SK-N-SH (cell line): ENCODE measurements at regions of chr15 and their contacts with region 1.

Region 1: DNA sequence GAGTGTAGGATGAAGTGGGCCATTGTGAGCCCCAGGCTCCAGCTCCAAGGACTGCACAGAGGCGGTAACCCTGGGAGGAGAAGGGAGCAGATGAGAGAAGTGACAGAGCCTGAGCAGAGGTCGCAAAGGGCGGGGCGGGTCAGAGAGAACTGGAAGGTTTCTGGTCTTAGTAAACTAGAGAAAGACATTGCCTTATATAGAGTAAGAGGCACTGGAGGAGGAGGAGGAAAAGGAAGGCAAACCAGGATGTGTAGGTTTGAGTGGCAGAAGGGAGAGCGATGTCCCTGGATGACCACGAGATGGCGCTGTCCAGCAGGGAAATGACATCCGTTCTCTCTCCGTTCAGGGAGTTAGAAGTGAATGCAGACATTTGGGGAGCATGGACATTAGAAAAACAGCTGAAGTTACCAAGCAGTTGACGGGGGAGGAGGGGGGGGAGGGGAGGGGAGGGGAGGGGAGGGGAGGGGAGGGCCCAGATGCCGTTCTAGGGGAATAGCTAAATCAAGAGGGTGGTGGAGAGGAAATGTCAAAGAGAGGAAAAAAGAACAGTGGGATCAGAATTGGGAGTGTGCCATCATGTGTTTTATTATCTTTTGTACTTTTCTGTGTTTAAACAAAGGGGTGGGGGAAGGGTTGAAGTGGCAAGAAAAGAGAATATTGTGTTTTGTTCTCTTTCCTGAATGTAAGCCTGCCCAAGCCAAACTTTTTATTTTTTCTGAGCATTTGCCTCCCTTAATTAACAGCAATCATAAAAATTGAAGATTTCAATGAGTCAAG is 48.8 kb downstream of the STARD5 start:
- DNase-seq: peak; percentile 74
- H3K4me3 ChIP-seq: no peak overlapping the region; a peak in 1 of 4 replicates
- H3K27ac ChIP-seq: no peak overlapping the region
- H3K4me1 ChIP-seq: no peaks in the 10 kb centered on the region; a peak in 1 of 4 replicates
- H3K27me3 ChIP-seq: peaks cover 15% of the 10 kb centered on the region; the same call in 1 of the 2 replicates
- CTCF ChIP-seq: peak; percentile 74
- EP300 ChIP-seq: no peak
- RAD21 ChIP-seq: peak; percentile 96

Region 2: DNA sequence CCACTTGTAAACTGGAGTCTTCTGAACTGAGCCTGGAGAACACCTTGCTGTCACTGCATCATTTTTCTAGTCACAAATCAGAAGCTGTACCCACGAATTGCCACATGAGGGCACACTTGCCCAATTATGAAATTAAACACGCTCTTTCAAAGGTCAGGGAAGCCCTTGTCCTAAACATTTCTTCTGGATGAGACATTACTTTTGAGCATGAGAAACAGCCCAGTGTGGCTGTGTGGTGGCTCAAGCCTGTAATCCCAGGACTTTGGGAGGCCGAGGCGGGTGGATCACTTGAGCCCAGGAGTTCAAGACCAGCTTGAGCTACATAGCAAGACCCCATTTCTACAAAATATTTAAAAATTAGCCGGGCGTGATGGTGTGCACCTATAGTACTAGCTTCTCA is 168.6 kb before region 1 on chr15:
- CTCF ChIA-PET with region 1: interaction called, 451 read pairs
- POLR2A ChIA-PET with region 1: no interaction called
- DNase-seq: peak; percentile 70
- H3K4me3 ChIP-seq: no peak overlapping the region; a peak in 1 of 4 replicates
- H3K27ac ChIP-seq: no peak overlapping the region
- H3K4me1 ChIP-seq: no peaks in the 10 kb centered on the region
- H3K27me3 ChIP-seq: peaks cover 5% of the 10 kb centered on the region; the same call in 1 of the 2 replicates
- CTCF ChIP-seq: peak; percentile 81
- EP300 ChIP-seq: no peak
- RAD21 ChIP-seq: peak; percentile 94

Region 3: GRCh38 chr15:81286621-81287121 is 11.6 kb after region 1 on chr15:
- CTCF ChIA-PET with region 1: interaction called, 57 read pairs
- POLR2A ChIA-PET with region 1: no interaction called
- DNase-seq: no peak
- H3K4me3 ChIP-seq: no peak overlapping the region
- H3K27ac ChIP-seq: no peak overlapping the region
- H3K4me1 ChIP-seq: no peaks in the 10 kb centered on the region
- H3K27me3 ChIP-seq: peaks cover 20% of the 10 kb centered on the region
- CTCF ChIP-seq: no peak
- EP300 ChIP-seq: no peak
- RAD21 ChIP-seq: no peak

Region 4: DNA sequence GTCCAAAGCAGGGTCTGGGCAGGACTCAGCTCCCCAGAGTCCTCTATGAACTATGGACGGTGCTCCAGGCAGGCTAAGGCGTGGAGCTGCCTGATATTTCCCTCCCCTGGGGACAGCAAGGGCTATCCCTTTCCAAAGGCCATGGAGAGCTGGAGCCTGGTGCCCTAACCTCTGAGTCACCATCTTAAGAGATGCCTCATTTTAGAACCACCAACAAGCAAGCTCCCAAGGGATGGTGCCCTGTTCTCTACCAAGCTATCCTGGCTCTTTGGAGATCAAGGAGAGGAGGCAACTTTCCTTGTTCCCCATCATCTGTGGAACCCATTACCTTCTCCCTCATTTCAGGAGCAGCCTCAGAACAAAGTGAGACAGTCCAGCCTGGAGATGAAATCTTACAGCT is 33.1 kb after region 1 on chr15:
- CTCF ChIA-PET with region 1: interaction called, 13 read pairs
- POLR2A ChIA-PET with region 1: no interaction called
- DNase-seq: no peak
- H3K4me3 ChIP-seq: no peak overlapping the region
- H3K27ac ChIP-seq: no peak overlapping the region
- H3K4me1 ChIP-seq: peaks cover 11 to 18% of the 10 kb centered on the region in 2 experiments; a peak in 2 of 4 replicates
- H3K27me3 ChIP-seq: no peaks in the 10 kb centered on the region
- CTCF ChIP-seq: no peak
- EP300 ChIP-seq: no peak
- RAD21 ChIP-seq: no peak

Region 5: GRCh38 chr15:81394603-81395002 is 119.5 kb after region 1 on chr15:
- CTCF ChIA-PET with region 1: interaction called, 173 read pairs
- POLR2A ChIA-PET with region 1: no interaction called
- DNase-seq: no peak
- H3K4me3 ChIP-seq: no peak overlapping the region
- H3K27ac ChIP-seq: no peak overlapping the region
- H3K4me1 ChIP-seq: no peaks in the 10 kb centered on the region
- H3K27me3 ChIP-seq: peaks cover 3% of the 10 kb centered on the region; the same call in 1 of the 2 replicates
- CTCF ChIP-seq: no peak
- EP300 ChIP-seq: no peak
- RAD21 ChIP-seq: no peak

Region 6: GRCh38 chr15:81410318-81410753 is 135.2 kb after region 1 on chr15:
- CTCF ChIA-PET with region 1: interaction called, 93 read pairs
- POLR2A ChIA-PET with region 1: no interaction called
- DNase-seq: peak; percentile 57
- H3K4me3 ChIP-seq: no peak overlapping the region; a peak in 1 of 4 replicates
- H3K27ac ChIP-seq: no peak overlapping the region
- H3K4me1 ChIP-seq: peaks cover 0 to 17% of the 10 kb centered on the region in 2 experiments; a peak in 2 of 4 replicates
- H3K27me3 ChIP-seq: no peaks in the 10 kb centered on the region
- CTCF ChIP-seq: peak; percentile 70
- EP300 ChIP-seq: no peak
- RAD21 ChIP-seq: peak; percentile 91

Region 7: DNA sequence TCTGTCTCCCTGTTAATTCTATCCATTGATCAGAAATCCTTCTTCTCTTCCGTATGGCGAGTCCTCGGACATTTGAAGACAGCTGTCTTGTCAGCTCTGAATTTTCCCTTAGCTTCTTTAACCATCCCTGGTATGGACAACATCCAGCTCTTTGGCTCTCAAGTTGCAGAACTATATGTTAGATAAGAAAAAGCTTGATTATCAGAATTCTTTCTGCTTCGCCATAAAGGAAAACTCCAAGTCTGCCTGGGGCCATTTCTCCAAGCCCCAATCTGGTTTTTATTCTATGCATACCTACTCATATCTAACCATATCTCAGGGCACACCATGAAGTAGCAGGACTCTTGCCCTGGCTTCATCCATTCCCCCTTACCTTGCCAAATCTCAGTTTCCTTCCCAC is 314.6 kb after region 1 on chr15:
- CTCF ChIA-PET with region 1: no interaction called
- POLR2A ChIA-PET with region 1: no interaction called
- DNase-seq: no peak
- H3K4me3 ChIP-seq: no peak overlapping the region
- H3K27ac ChIP-seq: no peak overlapping the region
- H3K4me1 ChIP-seq: peaks cover 0 to 3% of the 10 kb centered on the region in 2 experiments; a peak in 1 of 4 replicates
- H3K27me3 ChIP-seq: no peaks in the 10 kb centered on the region
- CTCF ChIP-seq: no peak
- EP300 ChIP-seq: no peak
- RAD21 ChIP-seq: no peak